ENCODE measurements at regions of chr17 and their contacts with region 1.

Region 1: DNA sequence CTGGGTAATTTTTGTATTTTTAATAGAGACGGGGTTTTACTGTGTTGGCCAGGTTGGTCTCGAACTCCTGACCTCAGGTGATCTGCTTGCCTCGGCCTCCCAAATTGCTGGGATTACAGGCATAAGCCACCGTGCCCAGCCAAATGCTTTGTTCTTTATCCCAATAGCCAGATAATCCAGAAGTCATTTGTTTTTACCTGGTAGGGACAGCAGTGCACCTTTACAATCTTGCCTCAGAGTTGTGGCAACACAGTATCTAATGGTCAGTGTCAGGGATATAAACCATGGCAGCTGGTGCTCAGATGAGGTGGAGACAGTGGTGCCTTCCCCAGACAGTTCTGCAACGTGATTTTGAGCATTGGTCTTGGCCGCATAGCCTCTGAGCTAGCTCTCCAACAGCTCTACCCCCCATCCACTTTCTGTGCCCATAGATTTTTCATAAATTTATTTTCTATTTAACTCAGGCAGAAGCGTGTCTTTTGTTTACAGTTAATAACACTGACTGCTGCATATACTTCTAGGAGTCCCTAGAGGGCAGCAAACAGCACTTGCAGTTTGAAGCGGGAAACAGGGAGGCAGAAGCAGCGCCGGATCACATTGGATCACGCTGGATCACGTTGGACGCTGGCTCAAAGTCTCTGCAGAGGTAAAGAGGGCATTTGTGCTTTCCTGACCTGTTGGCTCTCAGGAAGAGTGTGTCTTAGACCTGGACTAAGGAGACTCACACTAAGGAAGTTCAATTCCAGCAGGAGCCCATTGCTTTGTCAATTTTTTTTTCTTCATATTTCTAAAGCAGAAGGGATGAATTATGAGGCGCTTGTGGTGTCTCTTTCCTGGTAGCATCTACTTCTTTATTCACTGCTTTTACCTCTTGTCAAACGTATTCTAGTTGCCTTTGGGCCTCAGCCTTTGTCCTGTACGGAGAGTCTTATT is 5.1 kb upstream of the GGT6 start:
- DNase-seq: peak; percentile 74
- ATAC-seq: peak; percentile 89
- H3K4me3 ChIP-seq: no peak overlapping the region; the same call in 1 of the 2 replicates
- H3K27ac ChIP-seq: no peak overlapping the region
- H3K4me1 ChIP-seq: no peaks in the 10 kb centered on the region
- H3K27me3 ChIP-seq: no peaks in the 10 kb centered on the region
- CTCF ChIP-seq: peak; percentile 75

Region 2: GRCh38 chr17:4626734-4627256 is 61.3 kb after region 1 on chr17:
- CTCF ChIA-PET with region 1: interaction called, 6 read pairs
- POLR2A ChIA-PET with region 1: no interaction called
- intact Hi-C with region 1: loop called (anchors 1 kb)
- DNase-seq: no peak
- ATAC-seq: no peak
- H3K4me3 ChIP-seq: no peak overlapping the region
- H3K27ac ChIP-seq: no peak overlapping the region
- H3K4me1 ChIP-seq: no peaks in the 10 kb centered on the region; the same call in 1 of the 2 replicates
- H3K27me3 ChIP-seq: no peaks in the 10 kb centered on the region
- CTCF ChIP-seq: no peak